HepG2 (cell line): ENCODE measurements at regions of chr7 and their contacts with region 1.

Region 1: GRCh38 chr7:27130540-27131389 is at the start of gene HOXA4:
- DNase-seq: peak; percentile 77
- ATAC-seq: peak; percentile 89
- H3K4me3 ChIP-seq: peak within 1 kb of the TSS; percentile 62 to 88 (median 69)
- H3K27ac ChIP-seq: peak within 1 kb of the TSS; percentile 78
- H3K4me1 ChIP-seq: peaks cover 90% of the 10 kb centered on the region
- H3K27me3 ChIP-seq: no peaks in the 10 kb centered on the region
- CTCF ChIP-seq: no peak
- EP300 ChIP-seq: no peak; a peak in 1 of 4 replicates
- POLR2A ChIP-seq: peak; percentile 76 to 77
- RAD21 ChIP-seq: peak; percentile 50; the same call in 1 of the 2 replicates
- total RNA-seq, gene HOXA4: 1.8 and 2.4 TPM in 2 replicates

Region 2: DNA sequence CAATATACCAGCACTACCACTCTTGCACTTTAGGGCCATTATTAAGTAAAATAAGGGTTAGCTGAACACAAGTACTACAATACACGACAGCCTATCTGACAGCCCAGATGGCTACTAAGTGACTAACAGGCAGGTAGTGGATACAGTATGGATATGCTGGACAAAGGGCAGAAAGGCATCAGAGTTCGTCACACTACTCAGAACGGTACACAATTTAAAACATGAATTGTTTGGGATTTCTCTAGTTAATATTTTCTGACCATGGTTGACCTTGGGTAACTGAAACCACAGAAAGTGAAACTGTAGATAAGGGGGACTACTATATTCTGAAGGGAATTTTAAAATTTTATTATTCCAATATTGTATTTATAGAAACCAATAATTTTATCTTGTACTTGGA is 165.0 kb before region 1 on chr7:
- CTCF ChIA-PET with region 1: no interaction called
- POLR2A ChIA-PET with region 1: no interaction called
- in situ Hi-C with region 1: no loop called
- intact Hi-C with region 1: loop called (anchors 5 kb)
- DNase-seq: peak; percentile 68
- ATAC-seq: peak; percentile 99
- H3K4me3 ChIP-seq: peak overlapping the region in 1 of 3 experiments; percentile 23; a peak in 2 of 6 replicates
- H3K27ac ChIP-seq: no peak overlapping the region
- H3K4me1 ChIP-seq: peaks cover 19% of the 10 kb centered on the region
- H3K27me3 ChIP-seq: no peaks in the 10 kb centered on the region
- CTCF ChIP-seq: no peak
- EP300 ChIP-seq: no peak
- POLR2A ChIP-seq: no peak
- RAD21 ChIP-seq: no peak